Left ventricle myocardium superior (tissue), 1 donor: ENCODE measurements at regions of chr9 and their contacts with region 1.

Region 1: GRCh38 chr9:118809160-118809625 is 560.0 kb downstream of the BRINP1 start:
- DNase-seq: no peak
- ATAC-seq: no peak

Region 2: GRCh38 chr9:118882684-118883083 is 73.5 kb after region 1 on chr9:
- intact Hi-C with region 1: loop called (anchors 5 kb)
- DNase-seq: no peak
- ATAC-seq: no peak